ENCODE measurements at regions of chr17 and their contacts with region 1.

Region 1: GRCh38 chr17:1331708-1332107 is 52.2 kb downstream of the TRARG1 start:
- DNase-seq: no peak
- ATAC-seq: peak; percentile 24
- H3K4me3 ChIP-seq: no peak overlapping the region
- H3K4me3 Mint-ChIP-seq: peak overlapping the region; percentile 0
- H3K27ac ChIP-seq: no peak overlapping the region
- H3K27ac Mint-ChIP-seq: no peak overlapping the region
- H3K4me1 ChIP-seq: peaks cover 3 to 7% of the 10 kb centered on the region in 2 donors
- H3K4me1 Mint-ChIP-seq: peaks cover 11% of the 10 kb centered on the region
- H3K27me3 ChIP-seq: peaks cover 0 to 7% (median 1%) of the 10 kb centered on the region in 4 experiments
- H3K27me3 Mint-ChIP-seq: no peaks in the 10 kb centered on the region
- CTCF ChIP-seq: no peak

Region 2: GRCh38 chr17:1122533-1123392 is 208.9 kb before region 1 on chr17:
- CTCF ChIA-PET with region 1: interaction called, 43 read pairs
- POLR2A ChIA-PET with region 1: no interaction called
- intact Hi-C with region 1: no loop called
- DNase-seq: peak; percentile 85
- ATAC-seq: peak; percentile 95
- H3K4me3 ChIP-seq: no peak overlapping the region
- H3K4me3 Mint-ChIP-seq: no peak overlapping the region
- H3K27ac ChIP-seq: no peak overlapping the region
- H3K27ac Mint-ChIP-seq: no peak overlapping the region
- H3K4me1 ChIP-seq: peaks cover 12% of the 10 kb centered on the region in 2 donors
- H3K4me1 Mint-ChIP-seq: peaks cover 15% of the 10 kb centered on the region
- H3K27me3 ChIP-seq: no peaks in the 10 kb centered on the region
- H3K27me3 Mint-ChIP-seq: no peaks in the 10 kb centered on the region
- CTCF ChIP-seq: peak; percentile 92

Region 3: DNA sequence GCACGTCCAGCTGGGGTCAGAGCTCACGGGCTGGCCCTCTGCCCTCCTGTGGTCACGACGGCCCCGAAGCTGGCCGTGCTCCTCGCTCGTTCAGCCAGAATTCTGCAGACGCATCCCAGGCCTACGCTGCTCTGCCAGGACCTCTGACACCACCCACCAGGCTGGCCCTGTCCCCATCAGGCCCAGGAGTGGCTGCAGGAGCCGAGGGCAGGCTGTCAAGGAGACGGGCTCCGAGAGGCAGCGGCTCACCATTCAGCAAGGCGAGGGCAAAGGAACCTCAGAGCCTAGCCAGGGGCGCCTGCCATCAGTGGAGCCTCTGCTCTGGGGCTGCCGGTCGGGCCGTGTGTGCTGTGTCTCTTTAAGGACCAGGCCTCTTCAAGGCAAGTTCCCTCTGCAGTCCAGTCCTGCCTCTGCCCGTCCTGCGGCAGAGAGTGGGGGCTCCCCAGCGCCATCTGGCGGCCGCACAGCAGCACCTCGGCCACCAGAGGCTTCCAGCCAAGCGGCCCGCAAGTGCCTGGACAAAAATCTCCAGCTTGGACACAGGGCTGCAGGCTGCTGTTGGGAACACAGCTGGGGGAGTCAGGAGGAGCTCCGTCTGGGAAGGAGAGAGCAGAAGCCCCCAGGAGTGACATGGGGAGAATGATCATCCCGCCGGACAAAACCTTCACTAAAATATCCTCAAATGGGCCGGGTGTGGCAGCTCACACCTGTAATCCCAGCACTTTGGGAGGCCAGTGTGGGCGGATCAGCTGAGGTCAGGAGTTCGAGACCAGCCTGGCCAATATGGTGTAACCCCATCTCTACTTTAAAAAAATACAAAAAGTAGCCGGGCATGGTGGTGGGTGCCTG is 144.6 kb before region 1 on chr17:
- CTCF ChIA-PET with region 1: interaction called, 15 read pairs
- POLR2A ChIA-PET with region 1: no interaction called
- intact Hi-C with region 1: no loop called
- DNase-seq: peak; percentile 82
- ATAC-seq: peak; percentile 72
- H3K4me3 ChIP-seq: no peak overlapping the region
- H3K4me3 Mint-ChIP-seq: peak overlapping the region; percentile 59
- H3K27ac ChIP-seq: no peak overlapping the region
- H3K27ac Mint-ChIP-seq: peak overlapping the region; percentile 21
- H3K4me1 ChIP-seq: peaks cover 42 to 49% of the 10 kb centered on the region in 2 donors
- H3K4me1 Mint-ChIP-seq: peaks cover 54% of the 10 kb centered on the region
- H3K27me3 ChIP-seq: peaks cover 0 to under 1% (median 0%) of the 10 kb centered on the region in 4 experiments
- H3K27me3 Mint-ChIP-seq: no peaks in the 10 kb centered on the region
- CTCF ChIP-seq: peak; percentile 97

Region 4: GRCh38 chr17:1260086-1260769 is 71.5 kb before region 1 on chr17:
- CTCF ChIA-PET with region 1: interaction called, 16 read pairs
- POLR2A ChIA-PET with region 1: no interaction called
- intact Hi-C with region 1: no loop called
- DNase-seq: no peak
- ATAC-seq: no peak
- H3K4me3 ChIP-seq: peak overlapping the region in 4 of 5 experiments; percentile 32 to 67 (median 47)
- H3K4me3 Mint-ChIP-seq: peak overlapping the region; percentile 63
- H3K27ac ChIP-seq: no peak overlapping the region
- H3K27ac Mint-ChIP-seq: no peak overlapping the region
- H3K4me1 ChIP-seq: peaks cover 3 to 13% of the 10 kb centered on the region in 2 donors
- H3K4me1 Mint-ChIP-seq: peaks cover 12% of the 10 kb centered on the region
- H3K27me3 ChIP-seq: peaks cover 0 to 45% (median 16%) of the 10 kb centered on the region in 4 experiments
- H3K27me3 Mint-ChIP-seq: peaks cover 26% of the 10 kb centered on the region
- CTCF ChIP-seq: no peak

Region 5: DNA sequence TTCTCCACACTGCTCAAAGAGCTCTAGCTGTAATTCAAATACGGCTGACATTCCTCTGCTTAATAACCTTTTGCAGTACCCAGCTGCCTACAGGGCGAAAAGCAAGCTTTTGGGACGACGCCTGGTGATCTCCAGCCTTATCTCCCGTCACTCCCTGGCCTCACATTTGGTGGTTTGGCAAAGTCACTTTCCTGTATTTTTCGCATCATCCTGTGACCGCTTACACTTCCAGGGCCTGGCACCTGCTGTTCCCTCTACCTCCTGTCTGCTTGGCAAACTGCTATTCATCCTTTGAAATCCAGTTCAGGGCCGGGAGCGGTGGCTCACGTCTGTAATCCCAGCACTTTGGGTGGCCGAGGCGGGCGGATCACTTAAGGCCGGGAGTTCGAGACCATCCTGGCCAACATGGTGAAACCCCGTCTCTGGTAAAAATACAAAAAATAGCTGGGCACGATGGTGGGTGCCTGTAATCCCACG is 64.2 kb before region 1 on chr17:
- CTCF ChIA-PET with region 1: interaction called, 7 read pairs
- POLR2A ChIA-PET with region 1: no interaction called
- intact Hi-C with region 1: loop called (anchors 2 kb)
- DNase-seq: no peak
- ATAC-seq: no peak
- H3K4me3 ChIP-seq: peak overlapping the region; percentile 30 to 92 (median 79)
- H3K4me3 Mint-ChIP-seq: peak overlapping the region; percentile 86
- H3K27ac ChIP-seq: peak overlapping the region; percentile 69 to 79
- H3K27ac Mint-ChIP-seq: peak overlapping the region; percentile 59
- H3K4me1 ChIP-seq: peaks cover 8 to 10% of the 10 kb centered on the region in 2 donors
- H3K4me1 Mint-ChIP-seq: peaks cover 12% of the 10 kb centered on the region
- H3K27me3 ChIP-seq: peaks cover 0 to 22% (median 5%) of the 10 kb centered on the region in 4 experiments
- H3K27me3 Mint-ChIP-seq: peaks cover 7% of the 10 kb centered on the region
- CTCF ChIP-seq: no peak

Region 6: DNA sequence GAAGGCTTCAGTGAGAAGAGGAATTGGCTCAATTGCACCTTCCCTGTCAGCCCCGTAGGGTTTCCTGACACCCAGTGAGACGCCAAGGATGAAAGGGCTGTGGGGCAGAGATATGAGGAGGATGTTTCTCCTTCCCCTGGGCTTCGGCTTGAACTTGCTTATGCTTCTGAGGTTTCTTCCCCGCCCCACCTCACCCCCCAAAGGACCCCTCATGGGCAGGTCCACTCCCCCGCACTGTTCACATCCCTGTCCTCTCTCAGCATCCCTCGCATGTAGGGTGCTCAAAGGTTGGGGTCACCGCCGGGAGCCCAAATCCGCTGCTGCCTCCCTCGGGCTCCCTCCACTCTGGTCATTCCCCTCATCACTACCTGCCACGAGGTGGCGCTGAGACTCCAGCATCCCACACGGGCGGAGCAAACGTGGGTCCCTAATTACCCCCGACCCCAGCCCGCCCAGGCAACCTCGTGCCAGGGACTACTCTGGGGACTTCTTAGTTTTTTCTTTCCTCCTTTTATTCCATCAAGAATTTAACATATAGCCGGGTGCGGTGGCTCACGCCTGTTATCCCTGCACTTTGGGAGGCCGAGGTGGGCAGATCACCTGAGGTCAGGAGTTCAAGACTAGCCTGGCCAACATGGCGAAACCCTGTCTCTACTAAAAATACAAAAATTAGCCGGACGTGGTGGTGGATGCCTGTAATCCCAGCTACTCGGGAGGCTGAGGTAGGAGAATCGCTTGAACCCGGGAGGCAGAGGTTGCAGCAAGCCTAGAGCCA is 55.6 kb before region 1 on chr17:
- CTCF ChIA-PET with region 1: interaction called, 12 read pairs
- POLR2A ChIA-PET with region 1: no interaction called
- intact Hi-C with region 1: loop called (anchors 1 kb)
- DNase-seq: peak; percentile 79
- ATAC-seq: peak; percentile 85
- H3K4me3 ChIP-seq: no peak overlapping the region
- H3K4me3 Mint-ChIP-seq: peak overlapping the region; percentile 47
- H3K27ac ChIP-seq: no peak overlapping the region
- H3K27ac Mint-ChIP-seq: no peak overlapping the region
- H3K4me1 ChIP-seq: peaks cover 7 to 16% of the 10 kb centered on the region in 2 donors
- H3K4me1 Mint-ChIP-seq: peaks cover 18% of the 10 kb centered on the region
- H3K27me3 ChIP-seq: peaks cover 0 to 16% (median 2%) of the 10 kb centered on the region in 4 experiments
- H3K27me3 Mint-ChIP-seq: peaks cover 13% of the 10 kb centered on the region
- CTCF ChIP-seq: peak; percentile 81

Region 7: GRCh38 chr17:1532836-1533602 is 201.3 kb after region 1 on chr17:
- CTCF ChIA-PET with region 1: interaction called, 10 read pairs
- POLR2A ChIA-PET with region 1: no interaction called
- intact Hi-C with region 1: no loop called
- DNase-seq: peak; percentile 74
- ATAC-seq: peak; percentile 93
- H3K4me3 ChIP-seq: no peak overlapping the region
- H3K4me3 Mint-ChIP-seq: no peak overlapping the region
- H3K27ac ChIP-seq: no peak overlapping the region
- H3K27ac Mint-ChIP-seq: no peak overlapping the region
- H3K4me1 ChIP-seq: peaks cover 0 to 5% of the 10 kb centered on the region in 2 donors
- H3K4me1 Mint-ChIP-seq: peaks cover 6% of the 10 kb centered on the region
- H3K27me3 ChIP-seq: no peaks in the 10 kb centered on the region
- H3K27me3 Mint-ChIP-seq: no peaks in the 10 kb centered on the region
- CTCF ChIP-seq: peak; percentile 72

Region 8: DNA sequence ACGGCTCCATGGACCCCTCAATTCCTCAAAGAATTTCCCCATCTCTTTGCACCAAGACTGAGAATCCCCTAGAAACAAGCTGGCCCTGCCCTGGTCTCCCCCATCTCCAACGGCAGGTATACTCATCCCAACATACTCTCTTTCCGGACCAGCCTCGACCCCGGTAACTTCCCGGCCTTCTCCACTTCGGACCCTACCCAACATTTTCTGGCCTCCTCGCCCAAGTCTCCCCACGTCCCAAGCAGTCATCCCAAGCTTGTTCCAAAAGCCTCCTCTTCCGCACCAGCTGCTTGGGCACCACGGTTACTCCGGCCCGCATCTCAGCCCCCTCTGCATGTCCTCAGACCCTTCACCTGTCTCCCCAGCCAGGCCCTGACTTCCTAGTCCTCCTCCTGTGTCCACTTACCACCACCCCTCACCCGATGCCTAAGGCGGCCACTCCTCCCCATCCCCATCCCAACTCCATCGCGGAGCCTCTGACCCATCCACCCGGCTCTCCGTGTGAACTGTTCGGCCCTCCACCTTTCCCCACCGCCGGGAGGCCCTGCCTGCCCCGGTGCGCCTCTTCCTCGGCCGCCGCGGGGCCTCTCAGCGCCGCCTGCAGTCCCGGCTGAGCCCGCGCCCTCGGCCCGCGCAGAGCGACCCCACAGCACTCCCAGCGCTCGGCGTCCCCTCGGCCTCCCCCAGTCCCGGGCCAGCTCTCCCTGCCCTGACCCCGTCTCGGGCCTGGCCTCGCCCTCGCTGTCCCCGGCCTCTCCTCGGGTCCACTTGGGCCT is 229.9 kb after region 1 on chr17:
- CTCF ChIA-PET with region 1: no interaction called
- POLR2A ChIA-PET with region 1: no interaction called
- intact Hi-C with region 1: no loop called
- DNase-seq: peak; percentile 67
- ATAC-seq: peak; percentile 37
- H3K4me3 ChIP-seq: peak overlapping the region; percentile 8 to 72 (median 64)
- H3K4me3 Mint-ChIP-seq: peak overlapping the region; percentile 89
- H3K27ac ChIP-seq: peak overlapping the region in 1 of 2 donors; percentile 78
- H3K27ac Mint-ChIP-seq: peak overlapping the region; percentile 78
- H3K4me1 ChIP-seq: peaks cover 20 to 29% of the 10 kb centered on the region in 2 donors
- H3K4me1 Mint-ChIP-seq: peaks cover 39% of the 10 kb centered on the region
- H3K27me3 ChIP-seq: no peaks in the 10 kb centered on the region
- H3K27me3 Mint-ChIP-seq: no peaks in the 10 kb centered on the region
- CTCF ChIP-seq: peak; percentile 36

Measured in B cell (primary cell).